Activated CD4-positive, alpha-beta memory T cell treated with anti-CD3 and anti-CD28 coated beads, Interleukin-2, amount 10 ng/mL, durations not matched to agents 7 days and 5 days (primary cell): ENCODE measurements at regions of chrX and their contacts with region 1.

Region 1: DNA sequence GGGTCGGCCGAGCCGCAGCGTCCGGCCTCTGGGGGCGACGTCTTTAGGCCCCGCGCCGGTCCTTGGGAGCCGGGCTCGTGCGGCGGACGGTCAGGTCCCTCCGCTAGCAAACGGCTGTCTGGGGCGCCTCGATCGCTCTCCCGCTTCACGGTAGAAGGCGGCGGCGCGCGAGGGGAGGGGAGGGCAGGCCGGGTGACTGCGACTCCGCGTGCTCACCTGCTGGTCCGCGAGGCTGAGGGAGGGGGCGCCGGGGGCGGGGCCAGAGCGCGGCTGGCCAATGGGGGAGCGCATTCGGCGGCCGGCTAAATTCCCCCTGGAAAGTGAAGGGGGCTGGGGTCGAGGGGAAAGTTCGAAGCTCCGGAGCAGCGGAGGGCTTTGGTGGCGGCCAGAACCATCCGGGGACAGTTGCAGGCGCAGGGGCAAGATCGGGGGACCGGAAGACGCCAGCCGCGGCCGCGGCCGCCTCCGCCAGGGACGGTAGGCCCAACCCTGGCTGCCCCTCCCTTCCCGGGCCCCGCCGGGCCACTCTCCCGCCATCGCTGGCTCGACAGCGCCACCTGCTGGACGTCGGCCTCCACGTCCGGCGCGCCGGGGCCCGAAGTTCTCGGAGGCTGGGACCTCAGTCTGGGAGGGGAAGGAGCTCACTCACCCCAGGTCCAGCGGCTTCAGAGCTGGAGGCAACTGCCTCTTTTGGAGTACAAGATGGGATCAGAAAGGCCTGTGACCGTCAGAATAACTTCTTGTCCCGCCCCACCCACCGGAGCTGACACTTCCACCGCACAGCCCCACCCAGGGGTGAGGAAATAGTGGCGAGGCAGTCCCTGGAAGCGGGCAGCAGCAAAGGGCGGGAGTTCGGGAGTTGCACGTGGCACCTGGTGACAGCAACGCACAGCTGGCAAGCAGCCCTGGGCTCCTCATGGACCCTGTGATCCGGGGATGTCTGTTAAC is 49.9 kb downstream of the ELF4 start:
- DNase-seq: peak; percentile 84
- H3K4me3 Mint-ChIP-seq: peak overlapping the region; percentile 73
- H3K27ac Mint-ChIP-seq: peak overlapping the region; percentile 68
- H3K4me1 Mint-ChIP-seq: peaks cover 6% of the 10 kb centered on the region
- H3K27me3 Mint-ChIP-seq: no peaks in the 10 kb centered on the region

Region 2: DNA sequence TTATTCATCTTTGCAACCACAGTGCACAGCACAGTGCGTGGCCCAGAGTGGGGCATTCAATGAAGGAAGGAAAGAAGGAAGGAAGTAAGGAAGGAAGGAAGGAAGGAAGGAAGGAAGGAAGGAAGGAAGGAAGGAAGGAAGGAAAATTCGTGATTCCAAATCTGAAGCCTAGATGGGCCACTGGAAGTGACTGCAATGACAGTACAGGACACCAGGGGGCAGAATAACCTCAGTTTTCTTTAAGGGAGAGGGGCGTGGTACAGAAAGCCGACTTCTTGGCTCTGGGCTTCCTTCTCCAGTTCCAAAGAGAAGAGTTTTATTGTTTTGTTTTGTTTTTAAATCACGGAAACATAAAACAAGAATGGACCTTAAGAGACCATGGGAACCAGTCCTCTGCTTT is 453.5 kb before region 1 on chrX:
- CTCF ChIA-PET with region 1: interaction called, 11 read pairs
- POLR2A ChIA-PET with region 1: no interaction called
- DNase-seq: peak; percentile 52
- H3K4me3 Mint-ChIP-seq: no peak overlapping the region
- H3K27ac Mint-ChIP-seq: no peak overlapping the region
- H3K4me1 Mint-ChIP-seq: peaks cover 23% of the 10 kb centered on the region
- H3K27me3 Mint-ChIP-seq: peaks cover 3% of the 10 kb centered on the region

Region 3: GRCh38 chrX:129905787-129906580 is 154.4 kb before region 1 on chrX and contains the start of gene UTP14A:
- CTCF ChIA-PET with region 1: interaction called, 13 read pairs
- POLR2A ChIA-PET with region 1: no interaction called
- DNase-seq: peak; percentile 89
- H3K4me3 Mint-ChIP-seq: peak within 1 kb of the TSS; percentile 93
- H3K27ac Mint-ChIP-seq: peak within 1 kb of the TSS; percentile 86
- H3K4me1 Mint-ChIP-seq: peaks cover 22% of the 10 kb centered on the region
- H3K27me3 Mint-ChIP-seq: no peaks in the 10 kb centered on the region
- total RNA-seq, gene UTP14A: 15.3 to 18.4 TPM

Region 4: DNA sequence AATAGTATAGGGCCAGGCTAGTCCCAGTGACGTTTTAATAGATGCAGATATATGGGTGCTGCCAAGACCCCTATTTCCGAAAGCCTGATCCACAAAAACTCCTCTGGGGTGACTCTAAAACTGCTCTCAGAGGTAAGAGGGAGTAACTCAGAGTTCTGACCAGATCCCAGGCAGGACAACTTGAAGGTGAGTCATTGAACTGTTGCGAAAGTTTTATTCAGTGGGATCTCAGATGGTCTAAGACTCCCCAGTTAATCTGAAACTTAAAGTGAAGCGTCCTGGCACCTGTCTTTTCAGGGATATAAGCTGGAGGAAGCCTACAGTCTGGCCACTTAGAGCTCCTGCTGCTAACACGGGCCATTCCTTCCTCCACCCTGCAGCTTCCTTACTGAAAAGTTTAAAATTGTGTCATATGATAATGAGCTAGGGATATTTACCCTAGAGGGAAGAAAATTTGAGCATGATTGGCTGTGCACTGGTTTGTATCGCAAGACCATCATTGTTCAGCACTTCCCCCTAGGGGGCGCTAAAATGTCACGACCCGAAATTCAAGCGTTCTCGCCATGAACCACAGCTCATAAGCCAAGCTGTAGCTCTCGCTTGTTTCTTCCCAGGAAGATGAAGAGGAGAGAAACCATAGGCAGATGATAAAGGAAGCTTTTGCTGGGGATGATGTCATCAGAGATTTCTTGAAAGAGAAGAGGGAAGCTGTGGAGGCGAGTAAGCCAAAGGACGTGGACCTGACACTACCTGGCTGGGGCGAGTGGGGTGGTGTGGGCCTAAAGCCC is 134.9 kb before region 1 on chrX:
- CTCF ChIA-PET with region 1: interaction called, 51 read pairs
- POLR2A ChIA-PET with region 1: interaction called, 13 read pairs
- DNase-seq: peak; percentile 72
- H3K4me3 Mint-ChIP-seq: no peak overlapping the region
- H3K27ac Mint-ChIP-seq: no peak overlapping the region
- H3K4me1 Mint-ChIP-seq: peaks cover 4% of the 10 kb centered on the region
- H3K27me3 Mint-ChIP-seq: no peaks in the 10 kb centered on the region

Region 5: DNA sequence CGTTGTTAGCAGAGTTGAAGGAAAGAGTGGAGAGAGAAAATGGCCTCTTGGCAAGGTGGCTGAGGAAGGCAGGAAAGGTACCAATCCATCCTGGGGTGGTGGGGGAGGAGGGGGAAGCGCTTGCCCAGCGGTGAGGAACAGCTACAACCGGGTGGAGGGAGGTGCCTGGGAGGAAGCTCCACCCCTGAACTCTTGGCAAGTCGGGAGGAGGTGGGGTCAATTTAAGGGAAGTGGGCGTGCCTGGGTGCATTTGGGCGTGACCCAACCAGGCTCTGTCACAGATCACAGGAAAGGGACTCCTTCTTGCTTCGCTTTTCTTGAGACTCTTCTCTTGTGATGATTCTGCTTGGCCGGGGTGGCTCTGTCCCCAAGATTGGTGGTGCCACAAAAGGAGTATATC is 36.3 kb before region 1 on chrX:
- CTCF ChIA-PET with region 1: interaction called, 14 read pairs
- POLR2A ChIA-PET with region 1: no interaction called
- DNase-seq: peak; percentile 88
- H3K4me3 Mint-ChIP-seq: peak overlapping the region; percentile 57
- H3K27ac Mint-ChIP-seq: peak overlapping the region; percentile 73
- H3K4me1 Mint-ChIP-seq: peaks cover 14% of the 10 kb centered on the region
- H3K27me3 Mint-ChIP-seq: no peaks in the 10 kb centered on the region